ENCODE measurements at regions of chr10 and their contacts with region 1.

Region 1: DNA sequence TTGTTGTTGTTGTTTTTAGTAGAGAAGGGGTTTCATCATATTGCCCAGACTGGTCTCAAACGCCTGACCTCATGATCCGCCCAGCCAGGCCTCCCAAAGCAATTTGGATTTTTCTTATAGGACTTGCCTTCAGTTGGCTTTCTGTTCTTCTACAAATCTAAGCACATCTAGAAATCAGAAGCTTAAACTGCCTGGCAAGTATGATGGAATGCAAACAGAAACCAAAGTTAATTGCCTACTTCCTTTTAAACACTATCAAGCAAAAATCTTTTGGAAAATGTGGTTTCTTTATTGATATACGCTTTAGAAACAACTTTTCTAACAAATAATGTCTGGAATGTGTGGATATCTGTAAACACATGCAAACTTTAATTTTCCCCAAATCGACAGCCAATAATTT is 64.9 kb downstream of the USP6NL start:
- DNase-seq: no peak
- ATAC-seq: no peak
- H3K4me3 ChIP-seq: no peak overlapping the region
- H3K27ac ChIP-seq: no peak overlapping the region
- H3K4me1 ChIP-seq: peaks cover 22% of the 10 kb centered on the region
- H3K27me3 ChIP-seq: no peaks in the 10 kb centered on the region
- CTCF ChIP-seq: no peak
- EP300 ChIP-seq: no peak
- POLR2A ChIP-seq: no peak
- RAD21 ChIP-seq: no peak

Region 2: DNA sequence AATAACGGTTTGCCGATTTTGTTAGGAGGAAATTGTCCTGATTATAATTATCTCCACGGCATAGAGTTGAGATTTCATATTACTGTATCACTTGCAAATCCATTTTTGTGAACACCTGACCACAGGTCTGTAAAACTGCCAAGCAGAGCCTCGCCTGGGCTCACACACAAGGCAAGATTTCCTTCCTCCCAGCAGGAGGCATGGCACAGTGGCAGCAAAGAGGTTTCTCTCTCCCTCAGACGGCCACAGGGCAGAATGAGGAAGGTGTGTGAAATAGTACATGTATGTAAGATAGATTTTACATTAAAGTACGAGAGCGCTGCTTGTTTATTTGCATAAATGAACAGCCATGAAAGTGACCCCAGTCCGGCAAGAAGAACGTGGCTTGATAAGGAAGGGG is 398.9 kb before region 1 on chr10:
- CTCF ChIA-PET with region 1: no interaction called
- POLR2A ChIA-PET with region 1: no interaction called
- RAD21 ChIA-PET with region 1: no interaction called
- SMC1A ChIA-PET with region 1: no interaction called
- in situ Hi-C with region 1: no loop called
- intact Hi-C with region 1: no loop called
- DNase-seq: no peak
- ATAC-seq: peak; percentile 58
- H3K4me3 ChIP-seq: no peak overlapping the region
- H3K27ac ChIP-seq: no peak overlapping the region
- H3K4me1 ChIP-seq: peaks cover 17% of the 10 kb centered on the region
- H3K27me3 ChIP-seq: no peaks in the 10 kb centered on the region
- CTCF ChIP-seq: peak in 1 of 3 experiments; percentile 28; a peak in 2 of 6 replicates
- EP300 ChIP-seq: no peak
- POLR2A ChIP-seq: no peak
- RAD21 ChIP-seq: no peak

Region 3: GRCh38 chr10:11602919-11603523 is 56.4 kb after region 1 on chr10:
- CTCF ChIA-PET with region 1: interaction called, 10 read pairs
- POLR2A ChIA-PET with region 1: interaction called, 3 read pairs
- RAD21 ChIA-PET with region 1: interaction called, 14 read pairs
- SMC1A ChIA-PET with region 1: interaction called, 11 read pairs
- in situ Hi-C with region 1: no loop called
- intact Hi-C with region 1: no loop called
- DNase-seq: peak; percentile 67
- ATAC-seq: peak; percentile 62
- H3K4me3 ChIP-seq: peak overlapping the region; percentile 54
- H3K27ac ChIP-seq: peak overlapping the region; percentile 64
- H3K4me1 ChIP-seq: peaks cover 45% of the 10 kb centered on the region
- H3K27me3 ChIP-seq: no peaks in the 10 kb centered on the region
- CTCF ChIP-seq: no peak
- EP300 ChIP-seq: peak; percentile 51 to 59; a peak in 2 of 4 replicates
- POLR2A ChIP-seq: no peak
- RAD21 ChIP-seq: no peak